MCF 10A (cell line): ENCODE measurements at regions of chr16 and their contacts with region 1.

Region 1: DNA sequence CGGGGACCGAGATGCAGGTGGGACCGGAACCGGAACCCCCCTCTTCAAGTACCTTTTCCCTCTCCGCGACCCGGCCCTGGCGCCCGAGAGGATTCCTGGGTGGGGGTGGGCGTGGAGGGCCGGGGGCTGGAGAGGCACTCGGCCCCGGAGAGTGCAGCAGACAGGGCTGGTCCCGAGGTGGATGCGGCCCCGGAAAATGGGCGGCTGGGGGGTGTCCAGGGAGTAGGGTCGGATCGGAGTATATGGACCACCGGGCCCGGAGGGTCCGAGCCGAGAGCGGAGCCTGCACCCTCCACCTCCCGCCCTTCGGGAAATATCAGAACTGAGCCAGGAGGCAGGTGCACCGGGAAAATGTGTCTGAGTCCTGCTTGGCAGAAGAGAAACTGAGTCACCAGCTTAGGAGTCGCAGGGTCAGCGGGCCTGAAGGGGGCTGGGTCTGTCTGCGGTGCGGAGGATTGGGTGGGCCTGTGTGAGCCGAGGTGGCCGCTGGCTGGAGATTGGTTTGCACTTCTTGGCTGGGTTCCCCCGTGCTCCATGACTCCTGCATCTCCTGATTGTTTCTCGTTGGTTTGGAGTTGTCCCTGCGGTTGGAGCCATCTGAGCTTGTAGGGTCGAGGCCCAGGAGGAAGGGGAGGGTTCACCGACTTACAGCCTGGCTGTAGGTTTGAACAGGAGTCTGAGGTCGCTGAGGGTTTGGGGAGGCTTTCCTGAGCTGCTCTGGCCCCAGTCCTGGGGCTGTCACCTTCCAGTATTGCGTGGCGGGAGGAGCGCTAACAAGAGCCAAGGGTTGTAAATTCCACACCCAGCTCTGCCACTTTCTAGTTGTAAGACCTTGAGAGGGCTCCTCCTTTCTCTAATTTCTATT is 518 bp downstream of the SH2B1 start:
- DNase-seq: no peak
- H3K4me3 Mint-ChIP-seq: peak overlapping the region; percentile 94
- H3K27ac Mint-ChIP-seq: peak overlapping the region; percentile 90
- H3K4me1 Mint-ChIP-seq: peaks cover 14% of the 10 kb centered on the region
- H3K27me3 Mint-ChIP-seq: no peaks in the 10 kb centered on the region
- CTCF ChIP-seq: no peak

Region 2: GRCh38 chr16:28823872-28824716 is 40.1 kb before region 1 on chr16:
- CTCF ChIA-PET with region 1: interaction called, 4 read pairs
- POLR2A ChIA-PET with region 1: interaction called, 14 read pairs
- intact Hi-C with region 1: loop called (anchors 1 kb)
- DNase-seq: peak; percentile 96
- H3K4me3 Mint-ChIP-seq: peak overlapping the region; percentile 91
- H3K27ac Mint-ChIP-seq: peak overlapping the region; percentile 96
- H3K4me1 Mint-ChIP-seq: peaks cover 28% of the 10 kb centered on the region
- H3K27me3 Mint-ChIP-seq: no peaks in the 10 kb centered on the region
- CTCF ChIP-seq: peak; percentile 18

Region 3: GRCh38 chr16:28846080-28846932 is 17.9 kb before region 1 on chr16 and contains the start of gene TUFM:
- CTCF ChIA-PET with region 1: interaction called, 6 read pairs
- POLR2A ChIA-PET with region 1: interaction called, 135 read pairs
- intact Hi-C with region 1: no loop called
- DNase-seq: peak; percentile 97
- H3K4me3 Mint-ChIP-seq: peak within 1 kb of the TSS; percentile 99
- H3K27ac Mint-ChIP-seq: peak within 1 kb of the TSS; percentile 99
- H3K4me1 Mint-ChIP-seq: peaks cover 7% of the 10 kb centered on the region
- H3K27me3 Mint-ChIP-seq: no peaks in the 10 kb centered on the region
- CTCF ChIP-seq: peak; percentile 39
- total RNA-seq, gene TUFM: 184 and 198 TPM in 2 replicates

Region 4: GRCh38 chr16:28879841-28880588 is 15.9 kb after region 1 on chr16:
- CTCF ChIA-PET with region 1: interaction called, 6 read pairs
- POLR2A ChIA-PET with region 1: interaction called, 11 read pairs
- intact Hi-C with region 1: no loop called
- DNase-seq: peak; percentile 82
- H3K4me3 Mint-ChIP-seq: peak overlapping the region; percentile 79
- H3K27ac Mint-ChIP-seq: no peak overlapping the region
- H3K4me1 Mint-ChIP-seq: no peaks in the 10 kb centered on the region
- H3K27me3 Mint-ChIP-seq: peaks cover 12% of the 10 kb centered on the region
- CTCF ChIP-seq: no peak

Region 5: GRCh38 chr16:28901862-28902459 is 37.8 kb after region 1 on chr16:
- CTCF ChIA-PET with region 1: no interaction called
- POLR2A ChIA-PET with region 1: no interaction called
- intact Hi-C with region 1: no loop called
- DNase-seq: no peak
- H3K4me3 Mint-ChIP-seq: no peak overlapping the region
- H3K27ac Mint-ChIP-seq: no peak overlapping the region
- H3K4me1 Mint-ChIP-seq: no peaks in the 10 kb centered on the region
- H3K27me3 Mint-ChIP-seq: no peaks in the 10 kb centered on the region
- CTCF ChIP-seq: no peak

Region 6: DNA sequence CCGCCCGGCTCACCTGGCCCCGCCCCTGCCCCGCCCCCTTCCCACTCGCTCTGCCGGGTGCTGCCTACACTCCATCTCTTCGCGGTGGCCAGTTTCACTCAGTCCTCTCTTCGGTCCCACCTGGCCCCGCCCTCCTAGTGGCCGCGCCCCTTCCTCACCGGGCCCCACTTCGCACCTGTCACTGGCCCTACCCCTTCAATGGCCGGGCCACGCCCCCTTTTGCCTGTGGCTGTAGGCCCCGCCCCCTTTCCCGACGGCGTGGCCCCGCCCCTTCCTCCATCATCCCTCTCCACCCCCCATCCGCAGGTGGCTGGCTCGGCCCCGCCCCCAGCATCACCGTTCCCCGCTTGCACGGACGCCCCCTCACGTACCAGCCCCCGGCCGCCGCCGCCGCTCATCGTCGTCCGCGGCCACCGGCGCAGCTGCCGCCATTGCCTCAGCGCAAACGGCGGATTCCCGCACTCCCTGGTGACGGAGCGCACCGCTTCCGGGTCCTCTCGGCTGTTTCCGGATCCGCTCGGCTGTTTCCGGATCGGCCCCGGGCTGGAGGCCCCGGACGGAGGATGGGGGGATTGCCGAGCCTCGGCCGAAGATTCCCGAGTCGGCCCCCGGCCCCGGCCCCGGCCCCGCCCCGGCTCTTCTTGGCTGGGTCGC is 60.7 kb after region 1 on chr16 and contains the start of gene RABEP2:
- CTCF ChIA-PET with region 1: interaction called, 6 read pairs
- POLR2A ChIA-PET with region 1: interaction called, 24 read pairs
- intact Hi-C with region 1: no loop called
- DNase-seq: peak; percentile 95
- H3K4me3 Mint-ChIP-seq: peak within 1 kb of the TSS; percentile 85
- H3K27ac Mint-ChIP-seq: peak within 1 kb of the TSS; percentile 76
- H3K4me1 Mint-ChIP-seq: peaks cover 15% of the 10 kb centered on the region
- H3K27me3 Mint-ChIP-seq: no peaks in the 10 kb centered on the region
- CTCF ChIP-seq: no peak
- total RNA-seq, gene RABEP2: 10.7 and 17.8 TPM in 2 replicates

Region 7: GRCh38 chr16:28950648-28951409 is 86.7 kb after region 1 on chr16 and contains the start of gene NFATC2IP:
- CTCF ChIA-PET with region 1: interaction called, 10 read pairs
- POLR2A ChIA-PET with region 1: interaction called, 20 read pairs
- intact Hi-C with region 1: loop called (anchors 5 kb)
- DNase-seq: peak; percentile 99
- H3K4me3 Mint-ChIP-seq: peak within 1 kb of the TSS; percentile 99
- H3K27ac Mint-ChIP-seq: peak within 1 kb of the TSS; percentile 92
- H3K4me1 Mint-ChIP-seq: peaks cover 19% of the 10 kb centered on the region
- H3K27me3 Mint-ChIP-seq: no peaks in the 10 kb centered on the region
- CTCF ChIP-seq: no peak
- total RNA-seq, gene NFATC2IP: 39.5 and 41.3 TPM in 2 replicates